ENCODE measurements at regions of chr2 and their contacts with region 1.

Region 1: GRCh38 chr2:28276076-28276618 is 116.5 kb upstream of the FOSL2 start:
- DNase-seq: peak; percentile 94
- H3K4me3 Mint-ChIP-seq: peak overlapping the region; percentile 32
- H3K27ac Mint-ChIP-seq: peak overlapping the region; percentile 88
- H3K4me1 Mint-ChIP-seq: peaks cover 48% of the 10 kb centered on the region
- H3K27me3 Mint-ChIP-seq: no peaks in the 10 kb centered on the region
- CTCF ChIP-seq: no peak

Region 2: GRCh38 chr2:27771548-27772335 is 504.4 kb before region 1 on chr2 and contains the start of gene MRPL33:
- CTCF ChIA-PET with region 1: no interaction called
- POLR2A ChIA-PET with region 1: interaction called, 18 read pairs
- intact Hi-C with region 1: no loop called
- DNase-seq: peak; percentile 88
- H3K4me3 Mint-ChIP-seq: peak within 1 kb of the TSS; percentile 98
- H3K27ac Mint-ChIP-seq: peak within 1 kb of the TSS; percentile 95
- H3K4me1 Mint-ChIP-seq: peaks cover 40% of the 10 kb centered on the region
- H3K27me3 Mint-ChIP-seq: no peaks in the 10 kb centered on the region
- CTCF ChIP-seq: no peak
- total RNA-seq, gene MRPL33: 204 and 233 TPM in 2 replicates

Region 3: DNA sequence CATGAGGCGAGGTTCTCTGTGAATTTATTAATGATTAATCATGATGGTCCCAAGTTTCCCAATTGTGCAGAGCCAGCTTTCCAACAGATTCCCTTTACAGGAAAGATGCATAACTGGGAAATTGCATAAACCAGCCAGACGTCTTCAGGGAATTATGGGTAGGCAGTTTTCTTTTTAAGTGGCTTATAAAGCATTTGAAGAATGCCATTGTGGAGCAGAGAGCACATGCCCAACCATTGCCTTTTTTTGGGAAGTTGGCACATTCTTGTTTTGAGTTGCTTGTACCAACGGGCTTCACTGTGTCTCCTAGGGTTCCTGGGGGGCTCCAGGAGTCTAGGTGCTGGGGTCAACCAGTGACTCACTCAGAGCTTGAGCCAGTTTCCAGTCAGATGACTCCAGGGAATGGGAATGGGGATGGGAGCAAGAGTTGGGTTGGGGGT is 115.1 kb before region 1 on chr2:
- CTCF ChIA-PET with region 1: no interaction called
- POLR2A ChIA-PET with region 1: interaction called, 20 read pairs
- intact Hi-C with region 1: no loop called
- DNase-seq: peak; percentile 82
- H3K4me3 Mint-ChIP-seq: no peak overlapping the region
- H3K27ac Mint-ChIP-seq: peak overlapping the region; percentile 89
- H3K4me1 Mint-ChIP-seq: peaks cover 45% of the 10 kb centered on the region
- H3K27me3 Mint-ChIP-seq: no peaks in the 10 kb centered on the region
- CTCF ChIP-seq: no peak

Region 4: GRCh38 chr2:28185891-28186290 is 90.3 kb before region 1 on chr2:
- CTCF ChIA-PET with region 1: interaction called, 3 read pairs
- POLR2A ChIA-PET with region 1: interaction called, 29 read pairs
- intact Hi-C with region 1: no loop called
- DNase-seq: peak; percentile 55
- H3K4me3 Mint-ChIP-seq: no peak overlapping the region
- H3K27ac Mint-ChIP-seq: peak overlapping the region; percentile 94
- H3K4me1 Mint-ChIP-seq: peaks cover 16% of the 10 kb centered on the region
- H3K27me3 Mint-ChIP-seq: no peaks in the 10 kb centered on the region
- CTCF ChIP-seq: no peak

Region 5: DNA sequence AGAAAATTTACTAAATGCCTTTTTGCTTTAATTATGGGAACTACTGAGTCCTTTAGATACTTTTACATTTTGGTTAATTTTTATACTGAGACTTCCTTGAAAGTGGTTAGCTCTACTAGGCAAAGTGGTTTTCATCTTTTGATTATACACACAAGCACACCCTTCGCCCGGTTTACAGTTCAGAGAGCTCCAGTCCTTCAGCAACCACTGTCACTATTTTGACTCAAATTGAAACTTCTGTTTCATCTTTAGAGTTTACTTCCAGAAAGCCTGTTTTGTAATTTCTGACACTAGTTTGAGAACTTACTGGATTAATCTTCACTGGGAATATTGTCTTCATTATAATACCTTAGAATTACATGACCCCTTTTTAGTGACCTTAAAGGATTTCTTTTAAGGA is 23.8 kb before region 1 on chr2:
- CTCF ChIA-PET with region 1: interaction called, 5 read pairs
- POLR2A ChIA-PET with region 1: interaction called, 38 read pairs
- intact Hi-C with region 1: no loop called
- DNase-seq: no peak
- H3K4me3 Mint-ChIP-seq: no peak overlapping the region
- H3K27ac Mint-ChIP-seq: peak overlapping the region; percentile 39
- H3K4me1 Mint-ChIP-seq: peaks cover 7% of the 10 kb centered on the region
- H3K27me3 Mint-ChIP-seq: no peaks in the 10 kb centered on the region
- CTCF ChIP-seq: no peak

Region 6: DNA sequence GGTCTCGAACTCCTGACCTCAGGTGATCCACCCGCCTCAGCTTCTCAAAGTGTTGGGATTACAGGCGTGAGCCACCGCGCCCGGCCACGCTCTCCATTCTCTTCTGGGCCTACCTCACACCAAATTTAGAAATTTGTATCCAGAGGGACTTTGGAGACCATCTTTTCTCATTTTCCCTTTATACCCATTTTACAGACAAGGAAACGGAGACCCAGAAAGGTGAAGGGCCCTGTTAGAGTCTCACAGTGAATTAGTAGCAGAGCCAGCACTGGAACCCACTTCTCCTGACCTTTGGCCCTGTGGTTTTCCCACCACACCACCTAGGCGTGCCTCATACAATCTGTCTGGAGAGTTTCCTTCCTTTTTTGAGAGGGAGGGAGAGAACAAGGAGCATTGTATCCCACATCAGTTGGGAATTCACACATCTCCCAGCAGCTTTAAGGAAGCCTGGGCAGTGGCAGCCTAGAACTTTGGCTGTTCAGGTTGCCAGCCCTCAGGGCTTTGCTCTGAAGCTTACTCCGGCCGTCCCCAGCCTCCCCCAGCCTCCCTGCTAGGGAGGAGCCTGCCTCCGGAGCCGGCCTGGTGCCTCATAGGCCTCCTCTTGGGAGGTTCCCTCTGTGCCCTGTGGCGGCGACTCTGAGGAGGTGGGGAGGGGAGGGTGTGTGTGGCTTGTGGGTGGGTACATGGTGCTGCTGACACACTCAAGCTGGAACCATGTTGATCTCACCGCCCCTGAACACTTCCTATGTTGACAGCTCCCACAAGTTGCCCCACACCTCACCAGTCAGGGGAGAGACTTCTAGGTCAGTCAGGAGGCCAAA is 130.3 kb after region 1 on chr2:
- CTCF ChIA-PET with region 1: interaction called, 4 read pairs
- POLR2A ChIA-PET with region 1: interaction called, 11 read pairs
- intact Hi-C with region 1: no loop called
- DNase-seq: peak; percentile 75
- H3K4me3 Mint-ChIP-seq: no peak overlapping the region
- H3K27ac Mint-ChIP-seq: peak overlapping the region; percentile 85
- H3K4me1 Mint-ChIP-seq: peaks cover 40% of the 10 kb centered on the region
- H3K27me3 Mint-ChIP-seq: no peaks in the 10 kb centered on the region
- CTCF ChIP-seq: no peak

Region 7: GRCh38 chr2:28780496-28780895 is 504.3 kb after region 1 on chr2:
- CTCF ChIA-PET with region 1: no interaction called
- POLR2A ChIA-PET with region 1: no interaction called
- intact Hi-C with region 1: no loop called
- DNase-seq: no peak
- H3K4me3 Mint-ChIP-seq: no peak overlapping the region
- H3K27ac Mint-ChIP-seq: no peak overlapping the region
- H3K4me1 Mint-ChIP-seq: peaks cover 10% of the 10 kb centered on the region
- H3K27me3 Mint-ChIP-seq: no peaks in the 10 kb centered on the region
- CTCF ChIP-seq: no peak